ENCODE measurements at regions of chr4 and their contacts with region 1.

Region 1: DNA sequence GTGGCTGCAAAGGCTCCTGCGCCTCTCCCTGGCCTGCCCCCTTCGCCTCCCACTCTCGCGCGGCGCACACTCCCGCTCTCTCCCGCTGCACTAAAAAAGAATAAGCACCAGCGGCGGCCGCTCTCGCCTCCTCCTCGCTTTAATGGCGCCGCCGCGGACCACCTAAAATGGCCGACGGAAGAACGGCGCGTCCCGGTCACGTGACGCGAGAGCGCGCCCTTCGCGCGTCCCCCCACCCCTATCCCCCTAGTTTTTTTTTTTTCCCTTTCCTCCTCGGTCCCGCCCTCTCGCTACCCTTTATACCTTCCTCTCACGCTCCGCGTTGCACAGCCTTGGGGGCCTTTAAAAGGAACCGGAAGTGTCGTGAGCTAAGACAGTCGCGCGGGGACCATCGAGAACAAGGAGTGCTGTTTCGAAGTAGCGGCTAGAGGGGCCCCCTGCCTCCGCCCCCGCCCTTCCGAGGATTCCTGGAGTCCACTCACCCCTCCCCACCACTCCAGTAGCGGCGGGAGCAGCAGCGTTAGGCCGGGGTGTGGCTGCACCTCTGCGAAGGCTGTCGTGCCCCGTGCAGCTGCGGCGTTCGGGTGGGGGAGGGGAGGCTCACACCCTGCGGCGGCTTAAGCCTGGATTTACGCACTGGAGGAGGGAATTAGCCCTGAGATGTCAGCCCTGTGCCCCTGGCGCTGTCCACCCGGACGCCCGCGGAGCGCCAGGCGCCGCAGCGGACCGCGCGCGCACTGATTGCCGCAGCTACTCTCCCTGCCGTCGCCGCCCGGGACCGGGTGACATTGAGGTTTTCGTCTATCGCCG is at the start of gene HNRNPD:
- DNase-seq: peak; percentile 100
- ATAC-seq: peak; percentile 90
- H3K4me3 ChIP-seq: peak within 1 kb of the TSS; percentile 83
- H3K27ac ChIP-seq: peak within 1 kb of the TSS; percentile 92
- H3K4me1 ChIP-seq: no peaks in the 10 kb centered on the region
- H3K27me3 ChIP-seq: no peaks in the 10 kb centered on the region
- CTCF ChIP-seq: no peak
- POLR2A ChIP-seq: peak; percentile 83
- RAD21 ChIP-seq: no peak
- total RNA-seq, gene HNRNPD: 9.7 and 26.1 TPM in 2 replicates

Region 2: DNA sequence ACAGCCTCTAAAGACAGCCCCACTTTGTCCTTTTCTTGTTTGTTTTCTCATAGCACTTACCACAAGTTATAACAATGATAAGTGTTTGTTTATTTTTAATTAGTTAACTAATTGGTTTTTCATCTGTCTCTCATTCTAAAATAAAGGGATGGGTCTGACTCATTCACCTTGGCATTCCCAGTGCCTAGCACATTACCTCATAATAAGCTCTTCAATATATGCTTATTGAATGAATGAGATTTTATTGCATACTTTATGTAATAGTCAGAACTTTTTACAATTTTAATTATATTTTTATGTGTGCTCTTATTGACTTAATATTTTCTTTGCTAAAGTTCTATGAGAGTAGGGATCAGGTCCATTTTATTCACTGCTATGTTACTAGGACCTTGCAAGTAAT is 1136.2 kb before region 1 on chr4:
- CTCF ChIA-PET with region 1: no interaction called
- POLR2A ChIA-PET with region 1: no interaction called
- dilution Hi-C with region 1: no loop called
- in situ Hi-C with region 1: no loop called
- intact Hi-C with region 1: no loop called
- DNase-seq: no peak
- ATAC-seq: no peak
- H3K4me3 ChIP-seq: no peak overlapping the region
- H3K27ac ChIP-seq: no peak overlapping the region
- H3K4me1 ChIP-seq: peaks cover 2% of the 10 kb centered on the region; the same call in 1 of the 2 replicates
- H3K27me3 ChIP-seq: peaks cover 2% of the 10 kb centered on the region; the same call in 1 of the 2 replicates
- CTCF ChIP-seq: no peak
- POLR2A ChIP-seq: no peak
- RAD21 ChIP-seq: no peak

Region 3: GRCh38 chr4:81260443-81261101 is 1113.4 kb before region 1 on chr4:
- CTCF ChIA-PET with region 1: no interaction called
- POLR2A ChIA-PET with region 1: no interaction called
- dilution Hi-C with region 1: no loop called
- in situ Hi-C with region 1: no loop called
- intact Hi-C with region 1: no loop called
- DNase-seq: no peak
- ATAC-seq: no peak
- H3K4me3 ChIP-seq: no peak overlapping the region
- H3K27ac ChIP-seq: no peak overlapping the region
- H3K4me1 ChIP-seq: peaks cover 5% of the 10 kb centered on the region
- H3K27me3 ChIP-seq: no peaks in the 10 kb centered on the region
- CTCF ChIP-seq: peak; percentile 33; the same call in 1 of the 2 replicates
- POLR2A ChIP-seq: no peak
- RAD21 ChIP-seq: no peak

Region 4: DNA sequence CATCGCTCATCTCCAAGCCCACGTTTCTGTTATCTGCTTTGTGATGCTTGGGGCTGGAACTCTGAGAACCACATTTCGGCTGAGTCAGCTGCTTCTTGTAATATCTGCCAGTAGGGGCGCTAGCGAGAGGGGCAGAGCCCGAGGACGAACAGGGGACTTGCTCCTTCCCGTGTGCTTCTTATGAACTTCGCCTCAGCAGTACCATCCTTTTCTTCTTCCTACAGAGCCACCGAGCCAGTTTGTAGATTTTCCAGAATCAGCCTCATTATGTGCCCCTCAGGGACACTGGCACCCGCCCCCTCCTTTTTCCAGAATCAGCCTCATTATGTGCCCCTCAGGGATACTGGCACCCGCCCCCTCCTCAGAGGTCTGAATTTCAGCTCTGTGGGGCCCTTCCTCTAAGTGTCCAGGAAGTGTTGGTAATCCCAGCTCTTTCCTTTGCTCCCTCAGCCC is 460.6 kb before region 1 on chr4:
- CTCF ChIA-PET with region 1: no interaction called
- POLR2A ChIA-PET with region 1: no interaction called
- dilution Hi-C with region 1: no loop called
- in situ Hi-C with region 1: no loop called
- intact Hi-C with region 1: no loop called
- DNase-seq: peak; percentile 31
- ATAC-seq: peak; percentile 66
- H3K4me3 ChIP-seq: no peak overlapping the region
- H3K27ac ChIP-seq: no peak overlapping the region
- H3K4me1 ChIP-seq: no peaks in the 10 kb centered on the region
- H3K27me3 ChIP-seq: no peaks in the 10 kb centered on the region
- CTCF ChIP-seq: peak; percentile 52
- POLR2A ChIP-seq: no peak
- RAD21 ChIP-seq: no peak

Region 5: GRCh38 chr4:82360298-82361177 is 13.5 kb before region 1 on chr4:
- CTCF ChIA-PET with region 1: interaction called, 13 read pairs
- POLR2A ChIA-PET with region 1: no interaction called
- dilution Hi-C with region 1: no loop called
- in situ Hi-C with region 1: no loop called
- intact Hi-C with region 1: loop called (anchors 1 kb)
- DNase-seq: peak; percentile 29
- ATAC-seq: peak; percentile 69
- H3K4me3 ChIP-seq: no peak overlapping the region
- H3K27ac ChIP-seq: no peak overlapping the region
- H3K4me1 ChIP-seq: peaks cover 7% of the 10 kb centered on the region
- H3K27me3 ChIP-seq: no peaks in the 10 kb centered on the region
- CTCF ChIP-seq: peak; percentile 62
- POLR2A ChIP-seq: no peak
- RAD21 ChIP-seq: peak; percentile 54

Region 6: DNA sequence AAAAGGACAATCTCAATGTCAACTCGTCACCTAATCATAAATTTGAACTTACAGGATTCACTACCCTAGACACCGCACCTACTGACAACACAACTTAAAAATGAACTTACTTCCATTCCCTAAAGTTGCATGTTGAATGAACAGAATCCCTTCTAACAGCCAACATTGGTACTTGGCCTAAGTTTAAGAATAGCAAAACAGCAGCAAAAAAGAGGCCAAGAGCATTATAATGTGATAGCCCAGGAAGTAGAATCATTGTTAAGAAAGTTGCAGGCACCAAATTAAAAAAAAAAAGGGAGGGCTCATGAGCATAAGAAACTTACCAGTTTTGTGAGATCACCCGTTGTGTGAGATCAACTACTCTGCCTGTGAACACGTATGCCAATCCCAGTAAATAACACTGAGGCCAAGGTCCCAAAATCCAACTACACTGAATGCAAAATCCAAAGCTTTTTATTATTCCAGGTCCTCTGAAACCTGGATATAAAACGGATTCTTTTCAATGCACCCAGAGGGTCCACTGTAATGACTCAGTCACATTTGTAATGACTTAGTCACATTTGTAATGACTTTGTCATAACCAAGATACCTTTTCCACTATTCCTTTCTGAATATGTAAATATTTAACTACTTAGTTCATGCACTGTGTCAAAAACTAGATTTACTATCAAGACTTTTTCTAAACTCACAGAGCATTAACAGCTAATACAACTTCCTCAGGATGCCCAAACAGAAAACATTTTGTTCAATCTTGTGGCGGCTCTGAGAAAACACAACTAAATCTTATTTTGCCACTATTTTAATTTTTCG is 49.4 kb after region 1 on chr4:
- CTCF ChIA-PET with region 1: no interaction called
- POLR2A ChIA-PET with region 1: no interaction called
- dilution Hi-C with region 1: no loop called
- in situ Hi-C with region 1: no loop called
- intact Hi-C with region 1: loop called (anchors 1 kb)
- DNase-seq: peak; percentile 69
- ATAC-seq: peak; percentile 7; the same call in 1 of the 2 replicates
- H3K4me3 ChIP-seq: no peak overlapping the region
- H3K27ac ChIP-seq: no peak overlapping the region
- H3K4me1 ChIP-seq: peaks cover 6% of the 10 kb centered on the region
- H3K27me3 ChIP-seq: no peaks in the 10 kb centered on the region
- CTCF ChIP-seq: no peak
- POLR2A ChIP-seq: peak; percentile 67; the same call in 1 of the 2 replicates
- RAD21 ChIP-seq: no peak

Region 7: GRCh38 chr4:82428969-82429727 is 55.1 kb after region 1 on chr4:
- CTCF ChIA-PET with region 1: interaction called, 3 read pairs
- POLR2A ChIA-PET with region 1: no interaction called
- dilution Hi-C with region 1: no loop called
- in situ Hi-C with region 1: no loop called
- intact Hi-C with region 1: loop called (anchors 1 kb)
- DNase-seq: peak; percentile 85
- ATAC-seq: peak; percentile 75
- H3K4me3 ChIP-seq: peak overlapping the region; percentile 92
- H3K27ac ChIP-seq: peak overlapping the region; percentile 95
- H3K4me1 ChIP-seq: peaks cover 4% of the 10 kb centered on the region
- H3K27me3 ChIP-seq: no peaks in the 10 kb centered on the region
- CTCF ChIP-seq: peak; percentile 99
- POLR2A ChIP-seq: peak; percentile 99
- RAD21 ChIP-seq: no peak

Region 8: GRCh38 chr4:82643994-82644733 is 270.1 kb after region 1 on chr4:
- CTCF ChIA-PET with region 1: no interaction called
- POLR2A ChIA-PET with region 1: no interaction called
- dilution Hi-C with region 1: no loop called
- in situ Hi-C with region 1: no loop called
- intact Hi-C with region 1: no loop called
- DNase-seq: peak; percentile 58
- ATAC-seq: peak; percentile 78
- H3K4me3 ChIP-seq: no peak overlapping the region
- H3K27ac ChIP-seq: no peak overlapping the region
- H3K4me1 ChIP-seq: peaks cover 5% of the 10 kb centered on the region; the same call in 1 of the 2 replicates
- H3K27me3 ChIP-seq: no peaks in the 10 kb centered on the region
- CTCF ChIP-seq: no peak
- POLR2A ChIP-seq: no peak
- RAD21 ChIP-seq: no peak

Measured in IMR-90 (cell line).